Ovary (tissue), 10 donors: ENCODE measurements at regions of chr11 and their contacts with region 1.

Region 1: DNA sequence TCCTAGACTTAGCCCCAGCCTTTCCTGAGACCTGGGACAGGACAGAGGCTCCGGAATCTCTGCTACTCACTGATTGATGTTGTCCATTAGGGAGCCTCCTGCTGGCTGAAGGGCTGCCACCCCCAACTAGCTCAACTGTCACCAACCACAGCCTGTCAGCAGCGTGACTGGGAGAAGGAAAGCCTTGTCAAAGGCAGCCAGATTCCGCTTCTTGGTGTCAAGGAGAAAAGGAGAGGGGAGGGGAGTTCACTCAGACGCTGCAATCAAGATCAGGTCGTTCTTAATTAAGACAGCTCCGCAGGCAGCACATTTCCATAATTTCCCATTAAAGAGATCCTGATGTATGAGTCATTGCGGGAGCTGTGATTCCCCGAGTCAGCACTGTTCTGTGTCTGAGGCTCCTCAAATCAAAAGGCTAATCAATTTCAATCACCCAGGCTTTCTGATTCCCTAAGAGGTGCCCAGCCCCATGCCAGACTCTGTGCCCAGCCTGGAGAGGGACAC is 152.8 kb upstream of the ZBED5 start:
- DNase-seq: no peak
- H3K4me3 ChIP-seq: no peak overlapping the region
- H3K27ac ChIP-seq: no peak overlapping the region
- H3K4me1 ChIP-seq: no peaks in the 10 kb centered on the region
- H3K27me3 ChIP-seq: no peaks in the 10 kb centered on the region
- CTCF ChIP-seq: no peak
- EP300 ChIP-seq: no peak
- POLR2A ChIP-seq: no peak

Region 2: GRCh38 chr11:11735586-11735985 is 724.9 kb after region 1 on chr11:
- intact Hi-C with region 1: no loop called
- DNase-seq: no peak
- H3K4me3 ChIP-seq: no peak overlapping the region
- H3K27ac ChIP-seq: no peak overlapping the region
- H3K4me1 ChIP-seq: no peaks in the 10 kb centered on the region
- H3K27me3 ChIP-seq: no peaks in the 10 kb centered on the region
- CTCF ChIP-seq: no peak
- EP300 ChIP-seq: no peak
- POLR2A ChIP-seq: no peak

Region 3: GRCh38 chr11:12029738-12030363 is 1019.2 kb after region 1 on chr11:
- intact Hi-C with region 1: loop called in 1 of 4 experiments (anchors 10 kb)
- DNase-seq: no peak
- H3K4me3 ChIP-seq: no peak overlapping the region
- H3K27ac ChIP-seq: no peak overlapping the region
- H3K4me1 ChIP-seq: no peaks in the 10 kb centered on the region
- H3K27me3 ChIP-seq: no peaks in the 10 kb centered on the region
- CTCF ChIP-seq: no peak
- EP300 ChIP-seq: no peak
- POLR2A ChIP-seq: no peak